Prostate gland (tissue), 2 donors: ENCODE measurements at regions of chr11 and their contacts with region 1.

Region 1: GRCh38 chr11:130827451-130828377 is 88.6 kb downstream of the SNX19 start:
- DNase-seq: no peak
- H3K4me3 ChIP-seq: no peak overlapping the region
- H3K27ac ChIP-seq: no peak overlapping the region
- H3K4me1 ChIP-seq: no peaks in the 10 kb centered on the region
- H3K27me3 ChIP-seq: no peaks in the 10 kb centered on the region
- CTCF ChIP-seq: peak in 2 of 4 experiments; percentile 33 to 41
- POLR2A ChIP-seq: no peak

Region 2: DNA sequence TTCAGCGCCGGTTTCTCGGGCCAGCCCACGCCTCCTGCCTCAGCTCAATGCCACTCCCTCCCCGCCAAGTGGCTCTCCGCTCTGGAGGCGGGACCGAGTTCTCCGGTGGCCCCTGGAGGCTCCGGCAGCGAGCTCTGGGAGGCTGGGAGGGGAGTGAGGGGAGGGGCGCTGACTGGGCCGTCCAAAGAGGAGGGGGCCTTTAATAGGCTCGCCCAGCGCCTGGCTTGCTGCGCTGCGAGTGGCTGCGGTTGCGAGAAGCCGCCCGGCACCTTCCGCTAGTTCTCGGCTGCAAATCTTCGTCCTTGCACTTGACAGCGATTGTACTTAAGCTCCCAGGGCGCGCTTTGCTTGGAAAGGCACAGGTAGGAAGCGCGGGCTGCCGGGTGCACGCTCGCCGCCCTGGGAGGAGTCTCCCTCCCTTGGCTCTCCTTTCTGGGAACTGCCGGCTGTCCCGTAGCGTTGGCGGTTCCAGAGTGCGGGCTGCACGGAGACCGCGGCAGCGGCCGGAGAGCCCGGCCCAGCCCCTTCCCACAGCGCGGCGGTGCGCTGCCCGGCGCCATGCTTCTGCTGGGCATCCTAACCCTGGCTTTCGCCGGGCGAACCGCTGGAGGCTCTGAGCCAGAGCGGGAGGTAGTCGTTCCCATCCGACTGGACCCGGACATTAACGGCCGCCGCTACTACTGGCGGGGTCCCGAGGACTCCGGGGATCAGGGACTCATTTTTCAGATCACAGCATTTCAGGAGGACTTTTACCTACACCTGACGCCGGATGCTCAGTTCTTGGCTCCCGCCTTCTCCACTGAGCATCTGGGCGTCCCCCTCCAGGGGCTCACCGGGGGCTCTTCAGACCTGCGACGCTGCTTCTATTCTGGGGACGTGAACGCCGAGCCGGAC is 379.1 kb before region 1 on chr11 and contains the start of gene ADAMTS15:
- intact Hi-C with region 1: loop called (anchors 5 kb)
- DNase-seq: peak; percentile 63
- H3K4me3 ChIP-seq: peak within 1 kb of the TSS; percentile 30 to 41
- H3K27ac ChIP-seq: peak within 1 kb of the TSS; percentile 23 to 55
- H3K4me1 ChIP-seq: peaks cover 6% of the 10 kb centered on the region
- H3K27me3 ChIP-seq: no peaks in the 10 kb centered on the region
- CTCF ChIP-seq: peak in 1 of 4 experiments; percentile 4
- POLR2A ChIP-seq: peak; percentile 30
- total RNA-seq, gene ADAMTS15: 0.59 to 1.5 TPM

Region 3: DNA sequence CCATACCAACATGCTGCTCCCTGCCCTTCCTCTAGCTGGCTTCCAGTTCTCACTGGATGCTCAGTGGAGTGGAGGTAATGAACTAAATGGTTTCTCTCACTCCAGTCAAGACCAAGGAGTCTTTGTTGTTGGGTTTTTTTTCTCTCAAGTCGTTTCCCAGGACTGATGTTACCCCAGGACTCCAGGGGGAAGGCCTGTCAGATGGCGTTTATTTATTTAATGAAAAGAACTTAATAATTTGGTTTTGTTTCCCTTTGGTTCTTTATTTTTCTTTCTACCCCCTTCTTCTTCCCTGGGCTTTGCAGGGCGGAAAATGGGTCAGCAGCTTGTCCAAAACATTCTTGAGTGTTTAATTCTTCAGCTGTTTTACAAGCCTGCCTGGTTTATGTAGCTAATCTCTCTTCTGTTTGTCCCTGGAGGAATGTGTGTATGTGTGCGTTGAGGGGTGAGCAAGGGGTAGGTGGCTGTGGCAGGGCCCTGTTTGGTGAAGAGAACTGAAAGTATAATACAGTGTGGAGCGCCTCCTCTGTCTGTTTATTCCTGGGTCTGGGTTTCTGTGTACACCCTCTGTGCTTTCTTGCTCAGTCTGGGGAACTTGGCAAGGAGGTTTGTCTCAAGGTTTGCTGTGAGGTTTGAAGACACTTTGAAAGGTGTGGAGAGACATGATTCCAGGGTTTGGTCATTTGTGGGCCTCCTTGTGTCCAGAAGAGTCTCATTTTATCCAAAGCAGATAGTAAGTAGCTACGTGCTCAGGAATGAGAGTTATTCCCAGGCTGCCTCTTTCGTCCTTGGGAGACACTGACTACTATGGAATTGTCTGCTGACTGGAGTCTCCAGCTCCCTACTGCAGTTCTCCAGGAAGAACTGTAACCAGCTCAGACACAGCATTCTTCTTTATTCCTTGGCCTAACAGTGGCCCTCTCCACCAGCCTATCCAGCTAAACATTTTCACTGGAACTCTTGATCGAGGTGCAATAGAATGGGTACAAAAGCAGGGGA is 203.7 kb before region 1 on chr11:
- intact Hi-C with region 1: loop called (anchors 10 kb)
- DNase-seq: no peak
- H3K4me3 ChIP-seq: no peak overlapping the region
- H3K27ac ChIP-seq: no peak overlapping the region
- H3K4me1 ChIP-seq: no peaks in the 10 kb centered on the region
- H3K27me3 ChIP-seq: no peaks in the 10 kb centered on the region
- CTCF ChIP-seq: peak in 1 of 4 experiments; percentile 17
- POLR2A ChIP-seq: no peak

Region 4: GRCh38 chr11:130645164-130645842 is 182.4 kb before region 1 on chr11:
- intact Hi-C with region 1: loop called (anchors 5 kb)
- DNase-seq: no peak
- H3K4me3 ChIP-seq: no peak overlapping the region
- H3K27ac ChIP-seq: no peak overlapping the region
- H3K4me1 ChIP-seq: no peaks in the 10 kb centered on the region
- H3K27me3 ChIP-seq: no peaks in the 10 kb centered on the region
- CTCF ChIP-seq: no peak
- POLR2A ChIP-seq: no peak

Region 5: GRCh38 chr11:130861902-130862860 is 34.5 kb after region 1 on chr11:
- intact Hi-C with region 1: loop called (anchors 5 kb)
- DNase-seq: peak; percentile 86
- H3K4me3 ChIP-seq: no peak overlapping the region
- H3K27ac ChIP-seq: peak overlapping the region in 1 of 2 donors; percentile 1
- H3K4me1 ChIP-seq: no peaks in the 10 kb centered on the region
- H3K27me3 ChIP-seq: no peaks in the 10 kb centered on the region
- CTCF ChIP-seq: peak; percentile 100
- POLR2A ChIP-seq: no peak

Region 6: GRCh38 chr11:130947889-130948288 is 120.2 kb after region 1 on chr11:
- intact Hi-C with region 1: no loop called
- DNase-seq: no peak
- H3K4me3 ChIP-seq: no peak overlapping the region
- H3K27ac ChIP-seq: no peak overlapping the region
- H3K4me1 ChIP-seq: no peaks in the 10 kb centered on the region
- H3K27me3 ChIP-seq: no peaks in the 10 kb centered on the region
- CTCF ChIP-seq: no peak
- POLR2A ChIP-seq: no peak